ENCODE measurements at regions of chr6 and their contacts with region 1.

Region 1: DNA sequence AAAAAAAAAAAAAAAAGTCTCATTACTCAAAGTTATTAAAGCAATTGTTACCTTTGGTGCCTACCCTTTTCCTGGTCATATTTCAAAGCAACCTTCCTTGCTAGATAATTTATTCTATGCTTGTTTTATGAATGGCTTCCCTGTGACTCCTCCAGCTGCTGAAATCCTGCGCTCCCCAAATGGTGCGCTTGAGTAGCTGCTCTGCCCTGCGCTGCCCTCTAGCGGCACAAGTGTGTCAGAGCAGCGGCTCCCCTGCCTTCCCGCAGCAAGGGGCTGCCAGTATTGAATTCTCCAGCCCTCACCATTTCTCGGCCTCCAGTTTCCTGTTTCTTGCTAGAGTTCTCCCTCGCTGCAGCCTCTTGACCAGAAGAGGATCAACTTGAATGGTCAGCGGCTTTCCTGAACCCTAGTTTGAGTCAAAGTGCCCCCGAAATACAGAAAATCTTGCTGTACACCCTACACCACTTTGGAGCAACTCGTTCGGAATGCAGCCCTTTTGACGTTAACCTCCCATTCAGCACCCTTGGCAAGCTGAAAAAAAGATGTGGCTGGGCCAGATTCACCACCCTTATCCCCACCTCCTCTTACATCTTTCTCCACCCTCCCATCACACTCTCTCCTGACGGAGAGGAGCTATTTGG is 60.4 kb upstream of the KLHL31 start:
- DNase-seq: peak; percentile 39 to 93
- H3K4me3 ChIP-seq: no peak overlapping the region
- H3K27ac ChIP-seq: no peak overlapping the region
- H3K4me1 ChIP-seq: peaks cover 0 to 3% (median 3%) of the 10 kb centered on the region in 4 experiments; a peak in 3 of 7 replicates
- H3K27me3 ChIP-seq: no peaks in the 10 kb centered on the region
- CTCF ChIP-seq: peak; percentile 94 to 99 (median 97)
- EP300 ChIP-seq: no peak
- POLR2A ChIP-seq: no peak
- RAD21 ChIP-seq: peak; percentile 87 to 88

Region 2: DNA sequence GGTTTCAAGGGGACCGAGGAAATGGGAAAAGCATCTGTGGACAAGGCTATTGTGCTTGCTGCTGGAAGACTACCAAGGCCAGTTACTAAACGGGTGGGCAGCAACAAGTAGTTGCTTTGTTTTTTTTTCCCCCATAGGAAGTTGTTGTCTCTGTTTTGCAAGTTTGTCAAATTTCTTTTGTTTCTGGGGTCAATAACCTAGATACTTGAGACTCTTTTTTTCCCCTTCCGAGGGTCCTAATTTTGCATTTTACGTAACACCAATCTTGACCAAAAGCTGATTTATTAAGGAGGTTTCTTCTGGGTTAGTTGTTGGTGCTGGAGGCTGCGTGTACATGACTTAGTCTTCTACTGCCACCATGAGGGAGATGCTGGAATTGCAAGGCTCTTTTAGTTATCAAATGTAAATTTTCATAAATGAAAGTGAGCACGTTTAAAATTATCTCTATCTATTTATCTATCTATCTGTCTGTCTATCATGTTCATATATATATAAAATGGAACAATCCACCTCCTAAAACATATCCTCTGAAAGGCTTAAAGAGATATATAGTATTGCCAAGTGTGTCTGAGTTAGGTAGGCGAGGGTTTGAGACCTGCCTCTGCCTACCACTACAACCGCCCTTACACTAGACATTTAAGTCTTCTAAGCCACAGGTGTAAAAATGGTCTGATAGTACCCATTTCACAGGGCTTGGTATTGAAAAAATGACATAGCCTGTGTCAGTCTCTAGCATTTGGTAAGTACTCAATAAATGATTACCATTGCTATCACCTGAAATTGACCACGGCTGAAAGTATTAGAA is 241.2 kb before region 1 on chr6:
- CTCF ChIA-PET with region 1: interaction called, 13 read pairs
- POLR2A ChIA-PET with region 1: no interaction called
- DNase-seq: peak in 1 of 2 experiments; percentile 73
- H3K4me3 ChIP-seq: no peak overlapping the region
- H3K27ac ChIP-seq: no peak overlapping the region
- H3K4me1 ChIP-seq: no peaks in the 10 kb centered on the region
- H3K27me3 ChIP-seq: peaks cover 0 to 1% (median 0%) of the 10 kb centered on the region in 4 experiments; a peak in 1 of 7 replicates
- CTCF ChIP-seq: peak; percentile 7 to 85 (median 75)
- EP300 ChIP-seq: no peak
- POLR2A ChIP-seq: no peak
- RAD21 ChIP-seq: peak; percentile 93

Region 3: GRCh38 chr6:53651764-53652401 is 74.0 kb before region 1 on chr6:
- CTCF ChIA-PET with region 1: interaction called, 22 read pairs
- POLR2A ChIA-PET with region 1: no interaction called
- DNase-seq: peak; percentile 59 to 83
- H3K4me3 ChIP-seq: peak overlapping the region; percentile 34 to 82 (median 67)
- H3K27ac ChIP-seq: no peak overlapping the region
- H3K4me1 ChIP-seq: peaks cover 0 to 2% (median 0%) of the 10 kb centered on the region in 4 experiments; a peak in 2 of 7 replicates
- H3K27me3 ChIP-seq: peaks cover 8 to 16% (median 12%) of the 10 kb centered on the region in 4 experiments
- CTCF ChIP-seq: peak; percentile 21 to 29 (median 26)
- EP300 ChIP-seq: no peak
- POLR2A ChIP-seq: peak in 1 of 2 experiments; percentile 42; a peak in 2 of 3 replicates
- RAD21 ChIP-seq: peak in 1 of 2 experiments; percentile 29; a peak in 1 of 4 replicates

Region 4: GRCh38 chr6:53701333-53702218 is 24.3 kb before region 1 on chr6:
- CTCF ChIA-PET with region 1: interaction called, 132 read pairs
- POLR2A ChIA-PET with region 1: no interaction called
- DNase-seq: no peak
- H3K4me3 ChIP-seq: no peak overlapping the region
- H3K27ac ChIP-seq: no peak overlapping the region
- H3K4me1 ChIP-seq: no peaks in the 10 kb centered on the region
- H3K27me3 ChIP-seq: no peaks in the 10 kb centered on the region; a peak in 2 of 7 replicates
- CTCF ChIP-seq: no peak
- EP300 ChIP-seq: no peak
- POLR2A ChIP-seq: no peak
- RAD21 ChIP-seq: no peak

Region 5: DNA sequence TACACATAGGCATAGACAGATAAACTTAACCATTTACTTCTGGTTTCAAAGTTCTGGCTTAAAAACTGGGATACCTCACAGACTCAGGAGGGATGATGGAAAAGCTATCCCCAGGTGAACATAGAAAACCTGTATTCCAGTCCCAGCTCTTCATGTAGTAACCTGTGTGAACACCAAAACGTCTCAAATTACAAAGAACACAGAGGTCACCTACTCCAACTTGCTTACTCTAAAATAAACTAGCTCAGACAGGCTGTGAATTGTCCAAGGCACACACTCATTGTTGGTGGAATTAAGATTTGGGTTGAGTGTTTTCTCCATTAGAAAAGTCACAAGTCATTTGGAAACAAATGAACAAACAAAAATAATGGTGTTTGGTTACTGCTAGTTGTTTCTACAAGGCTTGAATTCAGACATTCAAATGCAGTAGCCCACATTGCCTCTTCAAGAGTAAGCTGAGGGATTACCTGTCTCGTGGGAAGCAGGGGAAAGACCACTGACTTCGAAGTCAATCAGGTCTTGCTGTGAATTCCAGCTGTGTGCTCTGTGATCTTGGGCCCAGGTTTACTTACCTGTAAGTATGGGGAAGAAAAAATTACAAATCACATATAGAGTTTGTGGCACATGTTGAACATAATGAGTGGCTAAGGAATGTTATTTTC is 20.7 kb after region 1 on chr6:
- CTCF ChIA-PET with region 1: interaction called, 21 read pairs
- POLR2A ChIA-PET with region 1: no interaction called
- DNase-seq: no peak
- H3K4me3 ChIP-seq: no peak overlapping the region
- H3K27ac ChIP-seq: no peak overlapping the region
- H3K4me1 ChIP-seq: no peaks in the 10 kb centered on the region; a peak in 1 of 7 replicates
- H3K27me3 ChIP-seq: no peaks in the 10 kb centered on the region
- CTCF ChIP-seq: no peak
- EP300 ChIP-seq: no peak
- POLR2A ChIP-seq: no peak
- RAD21 ChIP-seq: no peak

Region 6: GRCh38 chr6:53956068-53956711 is 230.3 kb after region 1 on chr6:
- CTCF ChIA-PET with region 1: interaction called, 197 read pairs
- POLR2A ChIA-PET with region 1: no interaction called
- DNase-seq: peak; percentile 73 to 86
- H3K4me3 ChIP-seq: no peak overlapping the region
- H3K27ac ChIP-seq: no peak overlapping the region
- H3K4me1 ChIP-seq: no peaks in the 10 kb centered on the region; a peak in 1 of 7 replicates
- H3K27me3 ChIP-seq: no peaks in the 10 kb centered on the region
- CTCF ChIP-seq: peak; percentile 86 to 95 (median 93)
- EP300 ChIP-seq: no peak
- POLR2A ChIP-seq: no peak
- RAD21 ChIP-seq: peak; percentile 98